Mucosa of descending colon (tissue), 3 donors: ENCODE measurements at regions of chr5 and their contacts with region 1.

Region 1: DNA sequence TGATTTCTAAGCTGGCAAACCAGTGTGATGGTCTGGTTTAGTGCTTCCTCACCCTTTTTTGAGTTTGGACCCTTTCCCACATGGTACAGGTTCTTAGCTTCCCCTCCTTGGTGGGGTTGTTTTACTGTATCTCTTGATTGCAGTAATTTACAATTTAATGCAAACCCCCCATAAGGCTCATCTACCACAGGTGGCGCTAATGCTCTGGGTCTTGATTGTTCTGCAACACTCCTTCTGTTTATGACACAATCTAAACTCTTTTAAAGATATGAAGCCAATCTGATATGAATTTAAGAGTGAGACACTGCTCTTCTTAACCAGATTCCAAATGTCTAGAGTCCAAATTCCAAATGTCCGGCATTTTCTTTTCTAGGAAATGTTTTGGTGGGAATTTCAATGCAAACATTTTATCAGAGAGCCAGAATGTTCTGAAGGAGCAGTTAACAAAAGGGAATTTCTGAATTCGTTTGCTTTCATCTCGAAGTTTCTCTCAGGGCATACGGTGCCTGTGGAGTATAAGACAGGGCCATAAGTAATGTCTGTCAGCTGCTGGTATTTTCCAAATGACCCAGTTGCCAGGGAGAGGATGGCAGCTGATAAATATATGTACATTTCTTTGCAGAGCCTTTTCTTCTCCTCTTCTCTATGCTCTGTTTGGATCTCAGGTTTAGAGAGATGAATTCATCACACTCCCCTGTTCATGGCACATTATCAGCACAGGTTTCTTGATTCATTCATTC is 246.8 kb downstream of the ARHGAP26 start:
- DNase-seq: peak in 1 of 3 donors; percentile 69
- ATAC-seq: peak; percentile 70
- H3K4me3 ChIP-seq: no peak overlapping the region
- H3K4me1 ChIP-seq: no peaks in the 10 kb centered on the region
- CTCF ChIP-seq: peak; percentile 30

Region 2: DNA sequence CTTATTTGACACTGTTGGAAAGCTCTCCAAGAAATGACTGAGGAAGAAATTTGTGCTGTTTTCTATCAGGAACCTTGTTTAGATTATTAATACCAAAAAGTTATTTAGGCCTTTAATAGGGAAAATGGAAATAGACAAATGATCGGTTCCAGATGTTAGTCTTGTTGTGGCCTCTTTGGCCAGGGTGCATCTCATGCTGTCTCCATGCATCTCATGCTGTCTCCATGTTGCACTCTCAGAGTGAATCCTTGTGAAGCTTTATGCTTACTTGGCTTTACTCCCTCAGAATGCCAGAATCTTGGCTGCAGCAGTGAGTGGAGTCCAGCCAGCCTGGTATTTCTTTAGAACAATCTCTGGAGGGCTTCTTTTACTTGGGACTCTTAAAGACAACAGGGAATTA is 61.3 kb before region 1 on chr5:
- intact Hi-C with region 1: no loop called
- DNase-seq: no peak
- ATAC-seq: no peak
- H3K4me3 ChIP-seq: no peak overlapping the region
- H3K4me1 ChIP-seq: no peaks in the 10 kb centered on the region
- CTCF ChIP-seq: no peak

Region 3: GRCh38 chr5:143685246-143685802 is 668.4 kb after region 1 on chr5:
- intact Hi-C with region 1: loop called in 1 of 2 experiments (anchors 10 kb)
- DNase-seq: no peak
- ATAC-seq: no peak
- H3K4me3 ChIP-seq: no peak overlapping the region
- H3K4me1 ChIP-seq: no peaks in the 10 kb centered on the region
- CTCF ChIP-seq: no peak